Endothelial cell of umbilical vein (primary cell): ENCODE measurements at regions of chr4 and their contacts with region 1.

Region 1: GRCh38 chr4:1266881-1267763 is 18.2 kb upstream of the CTBP1 start:
- DNase-seq: no peak
- H3K4me3 ChIP-seq: no peak overlapping the region
- H3K27ac ChIP-seq: no peak overlapping the region
- H3K4me1 ChIP-seq: no peaks in the 10 kb centered on the region
- H3K27me3 ChIP-seq: no peaks in the 10 kb centered on the region
- CTCF ChIP-seq: no peak
- POLR2A ChIP-seq: no peak

Region 2: GRCh38 chr4:781493-782216 is 485.5 kb before region 1 on chr4:
- CTCF ChIA-PET with region 1: no interaction called
- POLR2A ChIA-PET with region 1: no interaction called
- dilution Hi-C with region 1: no loop called
- intact Hi-C with region 1: no loop called
- DNase-seq: peak; percentile 100
- H3K4me3 ChIP-seq: peak overlapping the region; percentile 75 to 99 (median 91)
- H3K27ac ChIP-seq: peak overlapping the region; percentile 91
- H3K4me1 ChIP-seq: peaks cover 17% of the 10 kb centered on the region
- H3K27me3 ChIP-seq: peaks cover 0 to 2% of the 10 kb centered on the region in 2 experiments
- CTCF ChIP-seq: no peak
- POLR2A ChIP-seq: peak; percentile 90

Region 3: GRCh38 chr4:1130316-1131186 is 136.6 kb before region 1 on chr4:
- CTCF ChIA-PET with region 1: interaction called, 78 read pairs
- POLR2A ChIA-PET with region 1: no interaction called
- dilution Hi-C with region 1: no loop called
- intact Hi-C with region 1: loop called (anchors 1 kb)
- DNase-seq: peak; percentile 88
- H3K4me3 ChIP-seq: no peak overlapping the region
- H3K27ac ChIP-seq: no peak overlapping the region
- H3K4me1 ChIP-seq: no peaks in the 10 kb centered on the region
- H3K27me3 ChIP-seq: peaks cover 2 to 3% of the 10 kb centered on the region in 2 experiments
- CTCF ChIP-seq: peak; percentile 94 to 98
- POLR2A ChIP-seq: no peak

Region 4: DNA sequence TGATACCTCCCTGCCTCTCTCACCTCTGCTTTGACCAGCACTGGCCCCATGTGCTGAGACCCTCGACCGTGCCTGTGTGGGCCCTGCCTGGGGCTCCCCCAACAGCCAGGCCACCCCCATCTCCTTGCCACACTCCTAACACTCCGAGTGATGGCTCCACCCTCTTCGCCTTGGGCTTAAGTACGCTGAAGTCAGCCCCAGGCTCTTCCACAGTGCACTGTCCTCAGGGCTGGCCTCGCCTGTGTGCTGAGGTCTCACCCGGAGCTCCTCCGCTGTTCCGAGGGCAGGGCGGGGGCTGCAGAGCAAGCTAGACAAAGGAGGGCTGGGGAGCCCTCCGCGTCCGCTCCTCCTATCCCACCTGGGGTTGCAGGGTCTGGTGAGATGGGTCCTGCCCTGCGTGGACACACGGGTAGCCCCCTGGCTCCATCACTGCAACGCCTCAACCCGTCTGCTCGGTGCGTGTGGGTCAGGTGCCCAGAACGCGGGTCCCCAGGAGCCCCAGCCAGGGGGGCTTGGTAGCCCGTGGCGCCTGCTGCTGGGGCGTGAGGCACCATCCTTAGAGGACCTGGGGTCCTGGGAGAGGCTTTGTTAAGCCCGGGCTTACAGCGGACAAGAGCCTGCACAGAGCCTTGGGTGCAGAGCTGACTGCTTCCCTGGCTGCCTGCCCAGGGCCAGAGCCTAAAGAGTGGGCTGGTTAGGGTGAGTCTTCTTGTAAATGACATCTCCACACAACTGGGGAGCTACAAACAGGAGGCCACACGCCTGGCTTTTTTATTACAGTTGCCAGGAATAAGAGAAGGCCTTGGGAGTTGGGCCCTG is 181.7 kb after region 1 on chr4:
- CTCF ChIA-PET with region 1: no interaction called
- POLR2A ChIA-PET with region 1: no interaction called
- dilution Hi-C with region 1: no loop called
- intact Hi-C with region 1: no loop called
- DNase-seq: no peak
- H3K4me3 ChIP-seq: no peak overlapping the region
- H3K27ac ChIP-seq: no peak overlapping the region
- H3K4me1 ChIP-seq: no peaks in the 10 kb centered on the region
- H3K27me3 ChIP-seq: no peaks in the 10 kb centered on the region
- CTCF ChIP-seq: no peak
- POLR2A ChIP-seq: no peak

Region 5: DNA sequence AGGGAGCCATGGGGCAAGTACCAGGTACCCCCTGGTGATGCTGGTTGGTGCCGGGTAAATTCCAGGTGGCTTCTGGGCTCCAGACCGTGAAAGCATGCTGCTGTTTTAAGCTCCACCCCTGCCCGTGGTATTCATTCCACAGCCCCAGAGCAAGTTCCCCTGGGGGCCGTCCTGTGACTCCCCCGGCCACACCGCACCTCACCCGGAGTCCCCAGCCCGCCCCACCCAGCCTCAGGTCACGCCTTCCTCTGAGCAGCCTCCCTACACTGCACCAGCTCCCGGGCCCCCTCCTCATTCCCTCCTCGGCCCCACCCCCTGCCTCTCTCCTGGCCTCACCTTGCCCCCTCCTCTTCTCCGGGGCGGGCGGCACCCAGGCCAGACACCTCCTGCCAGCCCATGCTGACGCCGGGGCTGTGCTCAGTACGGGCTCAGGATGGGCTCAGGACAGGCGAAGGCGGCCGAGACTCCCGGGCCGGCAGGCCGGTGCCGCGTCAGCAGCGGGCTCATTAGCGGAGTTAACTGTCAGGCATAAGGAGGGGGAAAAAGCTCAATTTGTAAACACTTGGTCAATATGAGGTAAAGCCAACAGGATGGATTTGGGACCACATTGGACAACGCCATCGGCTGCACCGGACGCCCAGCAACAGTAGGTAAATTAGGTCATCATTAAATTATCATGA is 289.6 kb after region 1 on chr4:
- CTCF ChIA-PET with region 1: no interaction called
- POLR2A ChIA-PET with region 1: no interaction called
- dilution Hi-C with region 1: no loop called
- intact Hi-C with region 1: no loop called
- DNase-seq: no peak
- H3K4me3 ChIP-seq: no peak overlapping the region
- H3K27ac ChIP-seq: no peak overlapping the region
- H3K4me1 ChIP-seq: no peaks in the 10 kb centered on the region
- H3K27me3 ChIP-seq: no peaks in the 10 kb centered on the region
- CTCF ChIP-seq: no peak
- POLR2A ChIP-seq: no peak